ENCODE measurements at regions of chr7 and their contacts with region 1.

Region 1: DNA sequence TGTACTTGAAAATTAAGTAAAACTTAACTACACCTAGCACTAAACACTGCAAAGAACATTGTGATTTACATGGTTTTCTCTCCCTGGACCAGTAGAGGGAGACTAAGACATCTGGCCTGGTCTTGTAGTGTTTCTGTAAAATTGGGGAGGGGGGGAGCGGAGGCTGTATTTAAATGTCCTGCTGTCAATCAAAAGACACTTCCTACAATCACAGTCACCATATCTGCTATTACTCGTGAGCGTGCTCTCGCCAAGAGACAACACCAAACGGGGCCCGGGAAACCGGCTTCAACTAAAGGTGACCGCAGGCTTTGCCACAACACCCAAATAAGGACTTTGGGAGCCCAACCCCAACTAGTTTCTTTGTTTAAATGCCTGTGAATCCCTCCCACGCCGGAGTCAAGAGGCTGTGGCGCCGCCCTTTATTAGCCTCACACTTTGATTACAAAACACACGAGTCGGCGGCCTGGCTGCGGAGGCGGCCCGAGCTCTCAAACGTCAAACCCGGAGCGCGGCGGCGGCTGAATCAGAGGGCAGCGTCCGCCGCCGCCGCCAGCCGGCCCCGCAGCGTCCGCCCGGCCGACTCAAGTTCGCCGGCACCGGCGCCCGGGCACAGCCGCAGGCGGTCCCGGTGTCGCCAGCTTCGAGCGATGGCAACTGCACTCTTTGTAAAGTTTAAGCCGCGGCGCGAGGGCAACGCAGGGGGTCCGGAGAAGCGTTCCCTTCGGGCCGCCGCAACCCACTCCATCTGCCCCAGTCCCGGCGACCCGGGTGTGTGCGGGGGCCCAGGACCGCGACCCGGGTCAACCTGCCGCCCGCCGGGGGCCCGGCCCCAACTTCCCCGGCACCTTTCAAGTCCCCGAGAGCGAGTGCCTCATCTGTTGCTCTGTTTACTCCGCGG is 1.3 kb downstream of the KDM7A start:
- DNase-seq: peak; percentile 81 to 90 (median 83)
- H3K4me3 ChIP-seq: peak overlapping the region; percentile 89
- H3K27ac ChIP-seq: peak overlapping the region; percentile 84 to 92
- H3K4me1 ChIP-seq: no peaks in the 10 kb centered on the region
- H3K27me3 ChIP-seq: no peaks in the 10 kb centered on the region
- CTCF ChIP-seq: peak; percentile 68 to 78 (median 72)
- EP300 ChIP-seq: no peak
- POLR2A ChIP-seq: peak; percentile 79

Region 2: GRCh38 chr7:140079121-140079536 is 96.3 kb before region 1 on chr7:
- intact Hi-C with region 1: no loop called
- DNase-seq: peak in 3 of 5 donors; percentile 38 to 56 (median 55)
- H3K4me3 ChIP-seq: no peak overlapping the region
- H3K27ac ChIP-seq: no peak overlapping the region
- H3K4me1 ChIP-seq: peaks cover 1% of the 10 kb centered on the region
- H3K27me3 ChIP-seq: no peaks in the 10 kb centered on the region
- CTCF ChIP-seq: no peak
- EP300 ChIP-seq: no peak
- POLR2A ChIP-seq: no peak

Region 3: GRCh38 chr7:140121326-140121725 is 54.1 kb before region 1 on chr7:
- intact Hi-C with region 1: no loop called
- DNase-seq: no peak
- H3K4me3 ChIP-seq: no peak overlapping the region
- H3K27ac ChIP-seq: no peak overlapping the region
- H3K4me1 ChIP-seq: peaks cover 2% of the 10 kb centered on the region
- H3K27me3 ChIP-seq: no peaks in the 10 kb centered on the region
- CTCF ChIP-seq: no peak
- EP300 ChIP-seq: no peak
- POLR2A ChIP-seq: no peak

Region 4: DNA sequence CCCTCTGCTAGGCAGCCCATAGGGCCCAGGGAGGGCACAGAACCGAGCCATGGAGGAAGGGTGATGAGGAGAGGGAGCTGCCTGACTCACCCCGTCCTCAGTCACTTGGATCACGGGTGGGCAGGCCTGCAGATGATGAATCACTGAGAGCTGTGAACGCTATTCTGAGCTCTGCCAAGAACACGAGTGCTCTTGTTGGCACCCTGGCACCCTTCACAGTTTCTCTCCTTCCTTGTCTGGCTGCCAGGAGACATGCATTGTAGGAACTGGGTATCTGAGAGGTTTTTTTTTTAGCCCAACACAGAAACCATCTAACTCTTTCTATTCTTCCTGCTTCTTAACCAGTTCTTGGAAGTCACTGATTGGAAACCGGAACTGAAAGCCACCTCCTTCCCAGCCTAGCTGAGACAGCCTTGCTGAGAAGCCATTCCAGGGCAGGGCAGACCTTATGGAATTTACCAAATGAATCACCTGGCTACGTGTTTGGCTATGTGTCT is 140.7 kb after region 1 on chr7:
- intact Hi-C with region 1: loop called in 2 of 4 experiments (anchors 10 kb)
- DNase-seq: peak; percentile 53 to 67 (median 58)
- H3K4me3 ChIP-seq: peak overlapping the region; percentile 19
- H3K27ac ChIP-seq: peak overlapping the region; percentile 15 to 71
- H3K4me1 ChIP-seq: peaks cover 4% of the 10 kb centered on the region
- H3K27me3 ChIP-seq: no peaks in the 10 kb centered on the region
- CTCF ChIP-seq: no peak
- EP300 ChIP-seq: no peak
- POLR2A ChIP-seq: no peak

Region 5: GRCh38 chr7:140326116-140326928 is 150.9 kb after region 1 on chr7:
- intact Hi-C with region 1: loop called in 2 of 4 experiments (anchors 5 kb)
- DNase-seq: peak; percentile 63 to 74 (median 71)
- H3K4me3 ChIP-seq: no peak overlapping the region
- H3K27ac ChIP-seq: no peak overlapping the region
- H3K4me1 ChIP-seq: no peaks in the 10 kb centered on the region
- H3K27me3 ChIP-seq: no peaks in the 10 kb centered on the region
- CTCF ChIP-seq: peak; percentile 25 to 44 (median 38)
- EP300 ChIP-seq: no peak
- POLR2A ChIP-seq: no peak

Region 6: GRCh38 chr7:140479062-140479738 is 303.7 kb after region 1 on chr7 and contains the start of gene MKRN1:
- intact Hi-C with region 1: loop called in 1 of 4 experiments (anchors 10 kb)
- DNase-seq: peak; percentile 84 to 89 (median 86)
- H3K4me3 ChIP-seq: peak within 1 kb of the TSS; percentile 96
- H3K27ac ChIP-seq: peak within 1 kb of the TSS; percentile 47 to 55
- H3K4me1 ChIP-seq: peaks cover 2% of the 10 kb centered on the region
- H3K27me3 ChIP-seq: no peaks in the 10 kb centered on the region
- CTCF ChIP-seq: no peak
- EP300 ChIP-seq: no peak
- POLR2A ChIP-seq: peak; percentile 45
- total RNA-seq, gene MKRN1: 42.0 to 91.0 (median 73.6) TPM

Measured in ovary (tissue), 10 donors.